ENCODE measurements at regions of chr19 and their contacts with region 1.

Region 1: DNA sequence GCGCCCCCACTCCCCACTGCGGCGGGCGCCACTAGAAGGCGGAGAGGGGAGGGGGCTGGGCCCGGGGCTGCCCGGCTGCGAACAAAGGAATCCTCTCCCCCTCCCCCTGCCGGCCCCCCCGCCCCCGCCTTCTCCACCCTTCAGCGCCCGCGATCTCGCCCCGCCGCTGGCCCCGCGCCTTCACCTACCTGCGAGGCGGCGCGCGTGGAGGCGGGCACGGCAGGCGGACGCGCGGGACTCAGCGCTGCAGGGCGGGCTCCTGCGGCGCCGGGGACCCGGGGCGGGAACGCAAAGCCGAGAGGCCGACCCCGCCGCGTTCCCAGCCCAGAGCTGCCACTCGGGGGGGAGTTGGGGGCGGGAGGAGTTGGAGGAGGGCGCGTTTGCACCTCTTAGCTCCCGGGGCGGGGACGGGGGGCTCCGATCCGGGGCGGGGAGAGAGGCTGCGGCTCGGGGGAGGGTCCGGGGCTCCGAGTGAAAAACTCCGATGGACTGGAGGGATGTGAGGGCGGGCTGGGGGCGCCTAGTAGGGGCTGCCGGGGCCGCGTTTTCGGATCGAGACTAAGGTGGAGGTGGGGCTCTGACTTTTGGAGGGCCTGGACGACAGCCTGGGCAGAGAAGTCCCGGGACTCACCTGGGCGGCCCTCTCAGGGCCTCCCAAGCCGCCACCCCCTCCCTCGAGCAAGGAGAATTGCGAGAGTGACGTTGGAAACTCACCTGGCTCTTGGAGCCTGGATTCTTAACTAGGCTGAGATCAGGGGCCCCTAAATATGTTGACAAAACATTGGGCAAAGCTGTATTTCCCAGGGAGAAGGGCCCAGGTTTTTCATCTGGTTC is at the start of gene FBN3:
- DNase-seq: peak in 4 of 5 donors; percentile 71 to 87 (median 82)
- H3K4me3 ChIP-seq: peak within 1 kb of the TSS in 1 of 3 donors; percentile 12
- H3K27ac ChIP-seq: no peak within 1 kb of the TSS
- H3K4me1 ChIP-seq: no peaks in the 10 kb centered on the region
- H3K27me3 ChIP-seq: no peaks in the 10 kb centered on the region
- CTCF ChIP-seq: no peak
- total RNA-seq, gene FBN3: 0.44 TPM

Region 2: GRCh38 chr19:8257052-8257443 is 107.6 kb after region 1 on chr19:
- intact Hi-C with region 1: loop called (anchors 5 kb)
- DNase-seq: peak in 1 of 5 donors; percentile 45
- H3K4me3 ChIP-seq: no peak overlapping the region
- H3K27ac ChIP-seq: no peak overlapping the region
- H3K4me1 ChIP-seq: no peaks in the 10 kb centered on the region
- H3K27me3 ChIP-seq: no peaks in the 10 kb centered on the region
- CTCF ChIP-seq: no peak